HCT116 (cell line): ENCODE measurements at regions of chr20 and their contacts with region 1.

Region 1: GRCh38 chr20:48295445-48295963 is 510.2 kb upstream of the SULF2 start:
- DNase-seq: peak; percentile 79
- ATAC-seq: peak; percentile 92
- H3K4me3 ChIP-seq: no peak overlapping the region
- H3K27ac ChIP-seq: peak overlapping the region; percentile 19; the same call in 1 of the 2 replicates
- H3K4me1 ChIP-seq: peaks cover 20 to 46% of the 10 kb centered on the region in 2 experiments
- H3K27me3 ChIP-seq: 0 out of 2 replicates have a peak, but pooled peaks cover 5% of the 10 kb centered on the region
- CTCF ChIP-seq: peak; percentile 43 to 52 (median 51); a peak in 4 of 6 replicates
- POLR2A ChIP-seq: no peak
- RAD21 ChIP-seq: peak; percentile 85

Region 2: DNA sequence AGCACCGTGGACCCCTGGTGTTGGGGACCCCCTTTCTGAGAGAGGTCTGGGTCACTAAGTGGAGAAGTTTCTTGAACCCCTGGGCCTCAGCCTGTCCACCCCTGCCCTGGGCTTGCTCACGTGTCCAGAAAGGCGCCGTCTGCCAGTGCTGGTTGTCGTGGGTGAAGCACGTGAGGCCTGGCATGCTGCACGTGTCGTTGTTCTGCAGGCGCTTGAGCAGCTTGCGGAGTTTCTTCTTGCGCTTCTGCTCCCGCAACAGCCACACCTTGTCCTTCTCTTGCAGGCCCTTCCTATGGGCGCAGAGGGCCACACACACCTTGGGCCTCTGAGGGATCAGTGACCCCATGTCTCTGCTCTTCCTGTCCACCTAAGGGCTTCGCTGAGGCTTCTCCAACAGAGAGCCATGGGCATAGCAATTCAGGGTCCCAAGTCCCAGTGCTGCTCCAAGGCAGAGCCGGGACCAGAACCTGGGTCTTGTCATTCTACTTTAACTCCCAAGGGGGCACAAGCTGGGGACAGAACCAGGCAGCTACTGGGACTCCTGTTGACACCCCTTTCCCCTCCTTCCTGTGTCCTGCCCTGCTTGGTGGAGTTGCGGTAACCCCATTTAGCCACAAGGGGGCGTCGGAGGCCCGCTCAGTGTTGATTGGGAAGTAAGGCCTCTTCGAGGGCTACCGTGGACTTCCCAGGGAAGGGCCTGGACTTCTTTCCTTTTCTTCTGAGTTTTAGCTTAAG is 632.0 kb before region 1 on chr20:
- CTCF ChIA-PET with region 1: interaction called, 9 read pairs
- POLR2A ChIA-PET with region 1: no interaction called
- RAD21 ChIA-PET with region 1: no interaction called
- intact Hi-C with region 1: loop called (anchors 10 kb)
- DNase-seq: peak; percentile 51
- ATAC-seq: peak; percentile 97
- H3K4me3 ChIP-seq: no peak overlapping the region
- H3K27ac ChIP-seq: no peak overlapping the region
- H3K4me1 ChIP-seq: peaks cover 0 to 2% of the 10 kb centered on the region in 2 experiments; a peak in 1 of 4 replicates
- H3K27me3 ChIP-seq: no peaks in the 10 kb centered on the region
- CTCF ChIP-seq: peak; percentile 65 to 98 (median 97); a peak in 5 of 6 replicates
- POLR2A ChIP-seq: no peak
- RAD21 ChIP-seq: peak; percentile 78

Region 3: DNA sequence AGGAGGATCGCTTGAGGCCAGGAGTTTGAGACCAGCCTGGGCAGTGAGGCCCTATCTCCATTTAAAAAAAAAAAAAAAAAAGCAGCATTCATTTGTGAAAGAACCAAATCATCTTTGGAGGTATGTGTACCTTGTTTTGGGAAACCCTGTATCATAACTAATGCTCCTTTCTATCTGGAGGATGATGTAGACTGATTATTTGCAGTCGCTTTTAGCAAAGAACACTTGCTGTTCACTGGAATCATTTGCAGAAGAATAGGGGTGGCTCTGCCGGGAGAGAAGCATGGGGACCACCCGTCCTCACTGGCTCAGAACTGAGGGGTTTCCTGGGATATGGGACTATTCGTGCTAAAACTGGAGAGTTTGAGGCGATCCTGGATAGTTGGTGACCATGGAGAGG is 441.3 kb before region 1 on chr20:
- CTCF ChIA-PET with region 1: interaction called, 10 read pairs
- POLR2A ChIA-PET with region 1: no interaction called
- RAD21 ChIA-PET with region 1: no interaction called
- intact Hi-C with region 1: no loop called
- DNase-seq: no peak
- ATAC-seq: no peak
- H3K4me3 ChIP-seq: no peak overlapping the region
- H3K27ac ChIP-seq: no peak overlapping the region
- H3K4me1 ChIP-seq: peaks cover 0 to 7% of the 10 kb centered on the region in 2 experiments; a peak in 1 of 4 replicates
- H3K27me3 ChIP-seq: no peaks in the 10 kb centered on the region
- CTCF ChIP-seq: no peak
- POLR2A ChIP-seq: no peak
- RAD21 ChIP-seq: no peak

Region 4: GRCh38 chr20:48437109-48437508 is 141.6 kb after region 1 on chr20:
- CTCF ChIA-PET with region 1: no interaction called
- POLR2A ChIA-PET with region 1: no interaction called
- RAD21 ChIA-PET with region 1: no interaction called
- intact Hi-C with region 1: no loop called
- DNase-seq: no peak
- ATAC-seq: no peak
- H3K4me3 ChIP-seq: no peak overlapping the region
- H3K27ac ChIP-seq: no peak overlapping the region
- H3K4me1 ChIP-seq: no peaks in the 10 kb centered on the region
- H3K27me3 ChIP-seq: peaks cover 6% of the 10 kb centered on the region; the same call in 1 of the 2 replicates
- CTCF ChIP-seq: no peak
- POLR2A ChIP-seq: no peak
- RAD21 ChIP-seq: no peak